WTC11 (cell line): ENCODE measurements at regions of chr11 and their contacts with region 1.

Region 1: DNA sequence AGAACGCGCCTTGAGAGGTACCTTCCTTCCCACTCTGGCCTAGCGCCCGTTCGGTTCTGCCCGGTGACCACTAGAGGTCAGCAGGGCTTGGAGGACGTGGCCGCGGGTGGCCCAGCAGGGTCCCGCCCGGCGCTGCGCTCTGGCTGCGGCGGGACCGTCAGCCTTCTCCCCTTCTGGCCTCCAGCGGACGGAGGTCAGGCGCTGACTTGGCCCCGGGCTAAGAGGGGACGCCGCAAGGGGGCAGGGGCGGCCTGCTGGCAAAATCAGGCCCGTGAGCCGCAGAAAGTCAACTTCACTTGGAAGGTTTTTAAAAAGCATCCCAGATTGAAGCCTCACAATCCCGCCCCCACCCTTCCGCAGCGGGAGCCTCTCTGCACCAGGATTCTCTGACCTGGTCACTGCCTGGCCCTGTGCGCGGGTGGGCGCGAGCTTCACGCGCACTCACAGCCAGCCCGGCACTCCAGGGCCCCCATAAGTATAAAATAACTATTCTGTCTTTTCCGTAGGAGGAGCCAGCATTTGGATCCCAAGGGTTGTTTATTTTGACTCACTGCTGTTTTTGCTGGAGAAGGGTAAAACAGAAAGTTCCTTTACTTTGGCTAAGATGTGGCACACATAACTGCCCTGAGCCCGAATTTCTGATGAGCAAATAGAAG is 23.2 kb upstream of the ZBTB16 start:
- DNase-seq: peak; percentile 90
- ATAC-seq: peak; percentile 95
- H3K4me3 Mint-ChIP-seq: peak overlapping the region; percentile 50
- H3K27ac Mint-ChIP-seq: no peak overlapping the region
- H3K4me1 Mint-ChIP-seq: no peaks in the 10 kb centered on the region
- H3K27me3 Mint-ChIP-seq: no peaks in the 10 kb centered on the region
- CTCF ChIP-seq: peak; percentile 62

Region 2: DNA sequence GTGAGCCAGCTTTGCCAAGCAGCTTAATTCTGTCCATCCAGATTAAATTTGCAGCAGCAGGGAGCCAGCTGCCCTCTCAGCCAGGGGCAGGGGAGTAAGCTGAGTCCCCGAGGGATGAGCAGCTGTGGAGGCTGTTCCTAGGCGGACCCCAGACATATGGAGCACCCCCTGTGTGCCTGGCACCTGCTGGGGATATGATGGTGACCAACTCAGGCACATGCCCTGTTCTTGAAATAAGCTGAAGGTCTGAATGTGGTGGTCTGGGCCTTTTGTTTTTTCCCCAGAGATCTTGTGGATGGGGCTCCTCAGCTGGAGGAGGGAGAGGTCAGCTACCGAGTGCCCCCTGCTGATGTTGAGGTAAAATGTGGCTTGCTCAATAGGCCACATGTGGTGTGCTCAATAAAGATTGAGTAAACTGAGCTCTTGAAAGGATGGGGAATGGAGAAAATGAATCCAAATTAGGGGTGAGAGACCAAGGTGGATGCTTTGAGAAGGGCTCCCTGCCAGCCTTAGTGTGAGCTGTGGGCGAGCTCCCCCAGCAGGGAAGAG is 156.6 kb after region 1 on chr11:
- CTCF ChIA-PET with region 1: interaction called, 11 read pairs
- POLR2A ChIA-PET with region 1: no interaction called
- DNase-seq: no peak
- ATAC-seq: no peak
- H3K4me3 Mint-ChIP-seq: no peak overlapping the region
- H3K27ac Mint-ChIP-seq: no peak overlapping the region
- H3K4me1 Mint-ChIP-seq: peaks cover 11% of the 10 kb centered on the region
- H3K27me3 Mint-ChIP-seq: peaks cover 6% of the 10 kb centered on the region; the same call in 1 of the 2 replicates
- CTCF ChIP-seq: no peak

Region 3: DNA sequence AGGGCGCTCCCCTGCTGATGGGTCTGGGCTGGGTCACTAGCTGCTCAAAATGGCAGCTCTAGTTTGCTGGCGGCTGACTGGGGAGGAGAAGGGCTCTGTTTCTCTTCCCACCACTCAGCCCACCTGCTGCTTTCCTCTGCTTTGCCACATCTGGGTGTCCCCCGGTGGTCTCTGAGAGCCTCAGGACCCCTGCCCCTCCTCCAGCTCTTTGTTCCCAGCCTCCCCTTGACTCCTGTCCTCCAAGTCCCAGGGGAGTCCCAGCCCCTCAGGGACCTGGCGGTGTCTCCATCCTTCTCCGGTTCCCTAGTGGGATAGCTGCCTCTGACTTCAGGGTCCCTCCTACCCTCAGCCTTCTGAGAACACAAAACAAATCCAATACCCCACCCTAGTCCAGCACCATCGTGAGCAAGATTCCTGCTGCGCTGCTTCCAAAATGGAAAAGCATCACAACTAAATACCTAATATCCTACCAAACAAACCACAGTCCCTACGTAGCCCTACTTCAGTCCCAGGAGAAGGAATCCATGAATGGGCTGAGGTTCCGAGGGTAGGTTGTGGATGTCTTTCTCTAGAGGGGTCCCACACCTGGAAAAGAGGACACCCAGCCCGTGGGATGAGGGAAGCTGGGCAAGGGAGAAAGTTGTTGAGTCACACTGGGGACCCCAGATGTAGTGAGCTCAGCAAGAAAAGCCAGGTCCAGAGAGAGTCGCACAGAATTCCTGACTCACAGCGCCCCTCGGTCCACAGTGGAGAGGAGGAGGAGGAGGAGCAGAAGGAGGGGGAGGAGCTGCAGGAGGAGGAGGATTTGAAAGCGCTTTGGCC is 214.9 kb after region 1 on chr11:
- CTCF ChIA-PET with region 1: interaction called, 11 read pairs
- POLR2A ChIA-PET with region 1: no interaction called
- DNase-seq: no peak
- ATAC-seq: peak; percentile 71
- H3K4me3 Mint-ChIP-seq: no peak overlapping the region
- H3K27ac Mint-ChIP-seq: no peak overlapping the region
- H3K4me1 Mint-ChIP-seq: peaks cover 23% of the 10 kb centered on the region
- H3K27me3 Mint-ChIP-seq: no peaks in the 10 kb centered on the region; the same call in 1 of the 2 replicates
- CTCF ChIP-seq: no peak